ENCODE measurements at regions of chr11 and their contacts with region 1.

Region 1: DNA sequence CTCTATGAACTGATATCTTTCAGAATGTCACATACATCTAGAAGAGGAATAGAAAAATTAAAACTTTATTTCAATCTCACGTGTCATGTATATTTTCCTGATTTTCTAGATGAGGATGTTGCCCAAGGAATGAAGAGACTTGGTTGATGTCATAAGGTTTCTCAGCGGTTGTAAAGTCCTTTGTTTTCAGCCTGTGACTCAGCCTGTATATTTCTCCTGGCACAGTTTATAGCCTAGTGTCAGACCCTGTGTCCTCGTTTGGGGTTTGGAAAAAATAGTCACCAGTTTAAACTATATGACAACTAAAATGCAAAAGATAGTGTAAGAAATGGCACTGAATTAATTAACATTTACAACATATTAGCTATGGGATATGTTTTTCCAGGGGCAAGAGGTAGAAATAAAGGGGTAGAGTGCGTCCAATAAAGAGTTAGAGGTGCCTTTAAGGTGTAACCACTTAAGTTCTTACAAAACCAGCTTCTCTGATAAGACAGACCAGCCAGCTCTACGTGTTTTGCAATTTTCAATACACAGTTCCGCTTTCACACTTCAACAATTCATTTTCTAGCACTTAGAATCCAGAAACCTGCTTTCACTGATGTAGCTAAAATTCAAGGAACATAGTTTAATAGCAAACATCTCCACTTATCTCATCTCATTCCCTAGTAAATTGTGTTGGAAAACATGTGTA is 1432.6 kb upstream of the TENM4 start:
- DNase-seq: peak; percentile 18
- H3K4me3 ChIP-seq: no peak overlapping the region
- CTCF ChIP-seq: no peak

Region 2: DNA sequence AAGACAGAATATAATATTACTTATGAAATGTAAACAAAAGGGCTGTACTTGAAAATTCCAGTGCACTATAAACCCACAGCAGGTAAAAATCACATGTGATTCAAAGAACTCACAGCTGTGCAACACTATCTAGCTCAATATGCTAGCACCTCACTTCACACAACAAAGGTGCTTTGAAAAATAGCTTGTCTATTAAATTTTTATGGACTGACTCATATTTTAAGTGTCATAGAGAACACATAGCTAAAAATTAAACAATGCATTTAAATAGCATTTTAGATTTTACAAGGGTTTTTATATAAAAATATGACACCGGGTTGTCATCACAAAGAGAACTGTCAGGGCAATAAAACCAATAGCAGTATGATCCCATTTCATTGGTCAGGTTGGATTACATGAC is 42.1 kb before region 1 on chr11:
- in situ Hi-C with region 1: loop called (anchors 5 kb)
- DNase-seq: no peak
- H3K4me3 ChIP-seq: no peak overlapping the region
- CTCF ChIP-seq: no peak

Region 3: DNA sequence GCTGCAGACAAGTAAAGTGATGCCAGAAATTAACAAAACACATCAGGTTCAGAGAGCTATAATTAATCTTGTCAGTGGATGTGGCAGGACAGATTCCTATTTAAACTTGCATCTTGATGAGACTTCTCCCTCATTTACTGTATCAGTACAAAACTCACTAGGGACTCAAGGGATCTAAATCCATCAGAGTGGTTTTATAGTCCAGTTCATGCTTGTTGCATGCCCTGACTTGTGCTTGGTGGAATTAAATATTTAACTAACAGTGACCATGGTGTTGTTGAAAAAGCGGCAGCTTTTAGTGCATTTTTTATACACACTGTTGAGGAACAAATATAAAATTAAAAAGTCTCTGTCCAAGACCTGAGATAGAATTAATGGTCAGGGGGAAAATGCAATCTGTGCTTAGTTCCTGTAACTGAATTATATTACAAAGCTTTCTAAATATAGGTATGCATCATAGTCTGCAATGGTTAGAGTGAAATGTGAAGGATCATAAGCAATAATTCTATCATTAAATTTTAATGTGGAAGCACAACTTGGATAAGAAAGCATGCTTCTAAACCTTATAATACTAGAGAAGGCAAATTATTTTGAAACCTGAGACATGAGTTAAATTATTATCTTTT is 42.8 kb after region 1 on chr11:
- in situ Hi-C with region 1: no loop called
- DNase-seq: no peak
- H3K4me3 ChIP-seq: no peak overlapping the region
- CTCF ChIP-seq: no peak

Measured in astrocyte of the cerebellum (primary cell).